Heart left ventricle (tissue), 16 donors: ENCODE measurements at regions of chr14 and their contacts with region 1.

Region 1: GRCh38 chr14:105203057-105203531 is 22.0 kb upstream of the NUDT14 start:
- DNase-seq: peak; percentile 73 to 88 (median 76)
- ATAC-seq: peak; percentile 13 to 45 (median 30)
- H3K4me3 ChIP-seq: no peak overlapping the region
- H3K27ac ChIP-seq: peak overlapping the region in 8 of 12 donors; percentile 51 to 95 (median 72)
- H3K4me1 ChIP-seq: peaks cover 0 to 98% (median 59%) of the 10 kb centered on the region in 12 donors
- H3K27me3 ChIP-seq: peaks cover 0 to 21% (median 0%) of the 10 kb centered on the region in 9 donors
- CTCF ChIP-seq: peak; percentile 86 to 97 (median 93)
- POLR2A ChIP-seq: no peak

Region 2: GRCh38 chr14:105093431-105094192 is 109.5 kb before region 1 on chr14:
- intact Hi-C with region 1: loop called in 6 of 10 experiments (anchors 2 to 5 kb)
- DNase-seq: peak; percentile 67 to 87 (median 81)
- ATAC-seq: peak in 3 of 4 donors; percentile 33 to 48 (median 45)
- H3K4me3 ChIP-seq: peak overlapping the region; percentile 37 to 87 (median 76)
- H3K27ac ChIP-seq: peak overlapping the region; percentile 16 to 95 (median 86)
- H3K4me1 ChIP-seq: peaks cover 7 to 47% (median 36%) of the 10 kb centered on the region in 12 donors
- H3K27me3 ChIP-seq: no peaks in the 10 kb centered on the region
- CTCF ChIP-seq: peak in 11 of 12 donors; percentile 31 to 68 (median 53)
- POLR2A ChIP-seq: no peak

Region 3: DNA sequence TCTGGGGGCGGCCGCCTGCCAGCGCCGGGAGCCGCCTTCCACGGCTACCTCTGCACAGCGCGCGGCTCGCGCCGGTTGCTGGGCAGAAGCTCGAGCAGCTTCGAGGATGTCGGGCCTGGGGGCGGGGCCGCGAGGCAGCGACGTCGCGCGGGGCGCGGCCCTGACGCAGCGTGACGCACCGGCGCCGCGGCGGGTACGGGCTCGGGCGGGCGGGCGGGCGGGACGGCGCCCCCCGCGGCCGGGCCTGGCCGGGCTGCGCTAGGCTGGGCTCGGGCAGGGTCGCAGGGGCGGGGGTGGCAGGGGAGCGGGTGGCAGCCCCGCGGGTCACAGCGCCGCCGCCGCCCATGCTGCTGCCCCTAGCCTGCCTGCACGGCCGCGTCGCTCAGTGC is 45.3 kb after region 1 on chr14 and contains the start of gene BTBD6:
- intact Hi-C with region 1: loop called in 3 of 10 experiments (anchors 5 to 10 kb)
- DNase-seq: peak; percentile 86 to 93 (median 89)
- ATAC-seq: peak; percentile 78 to 94 (median 92)
- H3K4me3 ChIP-seq: peak within 1 kb of the TSS; percentile 36 to 86 (median 66)
- H3K27ac ChIP-seq: peak within 1 kb of the TSS; percentile 63 to 98 (median 90)
- H3K4me1 ChIP-seq: peaks cover 4 to 33% (median 17%) of the 10 kb centered on the region in 12 donors
- H3K27me3 ChIP-seq: no peaks in the 10 kb centered on the region
- CTCF ChIP-seq: peak in 1 of 12 donors; percentile 27
- POLR2A ChIP-seq: peak in 1 of 2 donors; percentile 43
- total RNA-seq, gene BTBD6: 28.8 to 51.8 (median 34.8) TPM

Region 4: GRCh38 chr14:105260959-105261358 is 57.9 kb after region 1 on chr14:
- intact Hi-C with region 1: loop called in 7 of 10 experiments (anchors 5 to 10 kb)
- DNase-seq: no peak
- ATAC-seq: peak in 3 of 4 donors; percentile 25 to 43 (median 30)
- H3K4me3 ChIP-seq: no peak overlapping the region
- H3K27ac ChIP-seq: no peak overlapping the region
- H3K4me1 ChIP-seq: peaks cover 0 to 16% (median 3%) of the 10 kb centered on the region in 12 donors
- H3K27me3 ChIP-seq: no peaks in the 10 kb centered on the region
- CTCF ChIP-seq: no peak
- POLR2A ChIP-seq: no peak

Region 5: GRCh38 chr14:105281371-105282097 is 78.4 kb after region 1 on chr14:
- intact Hi-C with region 1: loop called in 9 of 10 experiments (anchors 2 to 5 kb)
- DNase-seq: no peak
- ATAC-seq: peak in 1 of 4 donors; percentile 22
- H3K4me3 ChIP-seq: no peak overlapping the region
- H3K27ac ChIP-seq: no peak overlapping the region
- H3K4me1 ChIP-seq: peaks cover 0 to 16% (median 10%) of the 10 kb centered on the region in 12 donors
- H3K27me3 ChIP-seq: no peaks in the 10 kb centered on the region
- CTCF ChIP-seq: peak; percentile 40 to 70 (median 58)
- POLR2A ChIP-seq: no peak

Region 6: DNA sequence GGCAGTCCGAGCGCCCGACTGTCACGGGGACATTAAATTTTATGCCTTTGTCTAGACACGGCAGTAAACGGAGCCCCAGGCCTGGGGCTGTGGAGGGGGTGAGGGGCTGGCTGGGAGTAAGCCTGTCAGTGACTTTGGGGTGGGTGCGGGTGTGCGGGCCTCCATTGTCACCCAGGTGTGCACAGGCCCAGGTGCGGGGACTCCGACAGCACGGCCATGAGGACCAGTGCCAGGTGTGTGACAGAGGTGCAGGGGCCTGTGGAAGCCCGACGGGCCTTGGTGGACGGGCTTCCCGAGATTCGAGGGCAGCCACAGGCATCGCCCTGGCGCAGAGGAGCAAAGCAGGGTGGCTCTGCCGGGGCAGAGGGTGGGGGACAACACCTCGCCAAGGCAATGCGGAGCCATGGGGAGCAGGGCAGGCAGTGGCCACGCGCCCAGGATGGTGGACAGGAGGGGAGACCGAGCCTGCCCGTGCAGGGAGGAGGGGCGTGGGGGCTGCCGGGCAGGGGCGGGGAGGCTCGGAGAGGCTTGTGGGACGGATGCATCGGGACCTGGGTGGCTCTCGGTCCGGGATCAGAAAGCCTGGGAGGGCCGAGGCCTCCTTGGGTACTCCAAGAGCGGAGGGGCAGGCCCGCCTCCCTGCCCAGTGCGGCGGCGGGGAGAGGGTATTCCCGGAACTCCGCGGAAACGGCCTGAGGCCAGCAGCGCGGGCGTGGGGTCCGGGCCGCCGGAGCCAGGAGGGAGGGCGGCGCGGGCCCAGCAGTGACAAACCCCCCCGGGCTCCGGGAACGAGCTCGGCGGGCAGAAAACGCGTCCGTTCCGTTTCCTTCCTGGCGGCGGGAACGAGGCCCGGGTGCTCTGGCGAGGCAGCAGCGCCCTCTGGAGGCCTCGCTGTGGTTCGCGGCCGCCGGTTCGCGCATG is 324.8 kb after region 1 on chr14:
- intact Hi-C with region 1: loop called in 2 of 10 experiments (anchors 5 kb)
- DNase-seq: peak; percentile 74 to 91 (median 85)
- ATAC-seq: peak; percentile 59 to 83 (median 70)
- H3K4me3 ChIP-seq: peak overlapping the region; percentile 45 to 77 (median 70)
- H3K27ac ChIP-seq: peak overlapping the region in 11 of 12 donors; percentile 24 to 78 (median 67)
- H3K4me1 ChIP-seq: peaks cover 11 to 41% (median 27%) of the 10 kb centered on the region in 12 donors
- H3K27me3 ChIP-seq: peaks cover 0 to 28% (median 0%) of the 10 kb centered on the region in 9 donors
- CTCF ChIP-seq: peak; percentile 71 to 96 (median 90)
- POLR2A ChIP-seq: peak in 1 of 2 donors; percentile 40